Activated B cell treated with CpG ODN at 0.5 μM for 24 hours (primary cell): ENCODE measurements at regions of chr2 and their contacts with region 1.

Region 1: DNA sequence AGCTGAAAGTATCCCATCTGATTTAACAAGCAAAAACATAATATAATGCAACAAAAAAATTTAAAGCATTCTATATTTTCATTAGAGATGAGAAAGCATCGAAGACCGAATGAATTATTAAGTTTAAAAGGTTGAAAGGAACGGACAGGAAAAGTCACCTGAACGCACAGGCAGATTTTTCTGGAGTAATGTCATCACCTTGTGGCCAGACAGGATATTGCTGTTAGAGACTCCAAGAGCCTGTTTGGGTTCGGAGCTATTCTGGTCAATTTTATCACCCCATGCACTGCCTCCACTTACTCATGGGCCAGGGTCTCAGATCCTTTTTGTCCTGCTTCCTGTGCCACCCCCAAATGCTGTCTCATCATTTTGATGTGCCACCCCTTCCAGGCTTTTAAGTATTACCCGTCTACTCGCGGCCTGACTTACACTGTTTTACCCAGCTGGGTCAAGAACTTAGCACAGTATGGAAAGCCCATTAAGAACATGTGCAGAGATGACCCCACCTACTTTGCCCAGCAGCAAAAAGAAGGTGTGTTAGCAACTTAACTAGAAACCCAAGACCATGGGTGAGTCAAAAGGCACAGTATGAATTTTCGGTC is 27.3 kb downstream of the GKN2 start:
- DNase-seq: no peak
- ATAC-seq: peak; percentile 83
- H3K4me3 Mint-ChIP-seq: no peak overlapping the region
- H3K27ac Mint-ChIP-seq: no peak overlapping the region
- H3K4me1 Mint-ChIP-seq: peaks cover 3% of the 10 kb centered on the region
- H3K27me3 Mint-ChIP-seq: no peaks in the 10 kb centered on the region
- CTCF ChIP-seq: no peak

Region 2: GRCh38 chr2:68482296-68482820 is 443.0 kb before region 1 on chr2:
- CTCF ChIA-PET with region 1: interaction called, 114 read pairs
- POLR2A ChIA-PET with region 1: interaction called, 9 read pairs
- intact Hi-C with region 1: loop called (anchors 1 kb)
- DNase-seq: no peak
- ATAC-seq: no peak
- H3K4me3 Mint-ChIP-seq: no peak overlapping the region
- H3K27ac Mint-ChIP-seq: no peak overlapping the region
- H3K4me1 Mint-ChIP-seq: no peaks in the 10 kb centered on the region
- H3K27me3 Mint-ChIP-seq: no peaks in the 10 kb centered on the region
- CTCF ChIP-seq: no peak

Region 3: GRCh38 chr2:68487773-68488355 is 437.5 kb before region 1 on chr2:
- CTCF ChIA-PET with region 1: interaction called, 114 read pairs
- POLR2A ChIA-PET with region 1: interaction called, 9 read pairs
- intact Hi-C with region 1: loop called (anchors 1 kb)
- DNase-seq: no peak
- ATAC-seq: peak; percentile 54
- H3K4me3 Mint-ChIP-seq: no peak overlapping the region
- H3K27ac Mint-ChIP-seq: no peak overlapping the region
- H3K4me1 Mint-ChIP-seq: peaks cover 5% of the 10 kb centered on the region
- H3K27me3 Mint-ChIP-seq: no peaks in the 10 kb centered on the region
- CTCF ChIP-seq: peak; percentile 39

Region 4: GRCh38 chr2:68594674-68595492 is 330.5 kb before region 1 on chr2:
- CTCF ChIA-PET with region 1: interaction called, 7 read pairs
- POLR2A ChIA-PET with region 1: no interaction called
- intact Hi-C with region 1: loop called (anchors 2 kb)
- DNase-seq: peak; percentile 21
- ATAC-seq: peak; percentile 52
- H3K4me3 Mint-ChIP-seq: peak overlapping the region; percentile 0
- H3K27ac Mint-ChIP-seq: no peak overlapping the region
- H3K4me1 Mint-ChIP-seq: peaks cover 12% of the 10 kb centered on the region
- H3K27me3 Mint-ChIP-seq: peaks cover 5% of the 10 kb centered on the region
- CTCF ChIP-seq: peak; percentile 64

Region 5: DNA sequence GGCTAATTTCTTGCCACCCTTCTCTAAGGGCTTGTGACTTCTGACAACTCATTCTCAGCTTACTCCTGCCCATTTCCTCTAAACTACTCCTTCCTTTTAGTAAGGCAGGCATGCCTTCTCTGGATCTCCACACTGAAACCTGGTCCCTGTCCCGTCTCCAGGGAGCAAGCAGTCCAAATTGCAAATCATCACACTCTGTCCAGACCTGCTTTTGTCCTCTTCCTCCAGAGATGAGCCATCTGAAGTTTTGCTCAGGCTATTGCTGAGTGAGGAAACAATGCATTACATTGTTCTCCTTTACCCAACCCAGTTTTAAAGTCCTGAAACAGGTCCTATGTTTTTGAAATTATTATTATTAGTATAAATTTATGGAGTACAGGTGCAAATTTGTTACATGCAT is 133.5 kb before region 1 on chr2:
- CTCF ChIA-PET with region 1: no interaction called
- POLR2A ChIA-PET with region 1: no interaction called
- intact Hi-C with region 1: no loop called
- DNase-seq: no peak
- ATAC-seq: no peak
- H3K4me3 Mint-ChIP-seq: peak overlapping the region; percentile 36
- H3K27ac Mint-ChIP-seq: no peak overlapping the region
- H3K4me1 Mint-ChIP-seq: peaks cover 70% of the 10 kb centered on the region
- H3K27me3 Mint-ChIP-seq: no peaks in the 10 kb centered on the region
- CTCF ChIP-seq: no peak

Region 6: DNA sequence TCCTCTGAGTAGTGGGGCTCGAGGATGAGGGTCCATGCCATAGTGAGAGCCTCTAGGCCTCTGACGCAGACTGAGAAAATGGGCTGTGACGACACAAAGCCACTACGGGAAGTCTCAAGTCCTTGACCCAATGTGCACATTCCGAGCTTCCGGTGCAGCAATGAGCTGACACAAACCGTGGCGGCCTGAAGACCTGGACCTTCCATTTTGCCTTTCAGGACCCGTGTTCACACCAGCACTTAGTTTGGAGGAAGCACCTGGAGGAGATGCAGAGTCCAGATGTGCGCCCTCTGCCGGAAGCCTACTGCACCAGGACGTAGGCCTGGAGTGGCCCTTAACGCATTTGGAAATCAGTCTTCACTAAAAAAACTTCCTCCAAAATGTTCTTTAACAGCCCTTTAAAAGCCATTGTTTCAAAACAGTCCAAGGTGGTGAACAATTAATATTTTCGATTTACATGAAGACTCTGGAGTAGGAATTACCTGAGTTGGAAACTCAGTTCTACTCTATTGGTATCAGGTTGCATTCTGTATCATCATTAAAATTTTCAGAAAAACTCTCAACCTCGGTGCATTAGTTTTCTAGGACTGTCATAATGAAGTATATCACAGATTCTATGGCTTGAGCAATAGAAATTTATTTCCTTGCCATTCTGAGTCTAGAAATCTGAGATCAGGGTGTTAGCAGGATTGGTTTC is 88.1 kb before region 1 on chr2:
- CTCF ChIA-PET with region 1: interaction called, 7 read pairs
- POLR2A ChIA-PET with region 1: no interaction called
- intact Hi-C with region 1: loop called (anchors 1 kb)
- DNase-seq: peak; percentile 53
- ATAC-seq: peak; percentile 33
- H3K4me3 Mint-ChIP-seq: no peak overlapping the region
- H3K27ac Mint-ChIP-seq: peak overlapping the region; percentile 74
- H3K4me1 Mint-ChIP-seq: peaks cover 57% of the 10 kb centered on the region
- H3K27me3 Mint-ChIP-seq: no peaks in the 10 kb centered on the region
- CTCF ChIP-seq: no peak